ENCODE measurements at regions of chr2 and their contacts with region 1.

Region 1: DNA sequence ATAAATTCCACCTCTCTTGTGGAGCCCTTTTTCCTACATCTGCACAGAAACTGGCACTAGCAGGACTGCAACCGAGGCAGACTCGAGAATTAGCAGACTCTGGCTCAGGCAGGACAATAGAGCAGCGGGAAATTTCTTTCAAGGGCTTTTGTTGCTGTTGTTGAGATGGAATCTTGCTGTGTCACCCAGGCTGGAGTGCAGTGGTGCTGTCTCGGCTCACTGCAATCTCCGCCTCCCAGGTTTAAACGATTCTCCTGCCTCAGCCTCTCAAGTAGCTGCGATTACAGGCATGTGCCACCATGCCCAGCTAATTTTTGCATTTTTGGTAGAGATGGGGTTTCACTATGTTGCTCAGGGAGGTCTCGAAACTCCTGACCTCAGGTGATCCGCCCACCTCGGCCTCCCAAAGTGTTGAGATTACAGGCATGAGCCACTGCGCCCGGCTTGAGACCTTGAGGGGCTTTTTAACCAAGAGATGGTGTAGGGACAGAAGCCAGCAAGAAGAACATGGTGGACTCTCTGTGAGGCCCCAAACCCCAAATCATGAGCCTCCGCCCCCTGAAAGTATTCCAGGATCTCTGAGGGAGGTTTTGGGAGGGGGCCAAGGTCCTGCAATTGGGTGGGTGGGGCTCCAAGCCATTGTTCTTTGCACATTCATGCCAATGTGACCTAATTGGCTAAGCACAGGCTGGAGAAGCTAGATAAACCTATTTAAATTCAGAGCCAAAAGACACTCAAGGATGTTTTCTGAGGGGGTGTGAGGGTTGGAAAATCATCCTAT is 68.4 kb upstream of the MSH2 start:
- DNase-seq: no peak
- ATAC-seq: no peak
- H3K4me3 Mint-ChIP-seq: no peak overlapping the region
- H3K27ac Mint-ChIP-seq: no peak overlapping the region
- H3K4me1 Mint-ChIP-seq: no peaks in the 10 kb centered on the region
- H3K27me3 Mint-ChIP-seq: peaks cover 3% of the 10 kb centered on the region

Region 2: GRCh38 chr2:46857893-46858701 is 476.4 kb before region 1 on chr2:
- CTCF ChIA-PET with region 1: no interaction called
- POLR2A ChIA-PET with region 1: no interaction called
- intact Hi-C with region 1: no loop called
- DNase-seq: no peak
- ATAC-seq: no peak
- H3K4me3 Mint-ChIP-seq: no peak overlapping the region
- H3K27ac Mint-ChIP-seq: no peak overlapping the region
- H3K4me1 Mint-ChIP-seq: no peaks in the 10 kb centered on the region
- H3K27me3 Mint-ChIP-seq: no peaks in the 10 kb centered on the region

Region 3: DNA sequence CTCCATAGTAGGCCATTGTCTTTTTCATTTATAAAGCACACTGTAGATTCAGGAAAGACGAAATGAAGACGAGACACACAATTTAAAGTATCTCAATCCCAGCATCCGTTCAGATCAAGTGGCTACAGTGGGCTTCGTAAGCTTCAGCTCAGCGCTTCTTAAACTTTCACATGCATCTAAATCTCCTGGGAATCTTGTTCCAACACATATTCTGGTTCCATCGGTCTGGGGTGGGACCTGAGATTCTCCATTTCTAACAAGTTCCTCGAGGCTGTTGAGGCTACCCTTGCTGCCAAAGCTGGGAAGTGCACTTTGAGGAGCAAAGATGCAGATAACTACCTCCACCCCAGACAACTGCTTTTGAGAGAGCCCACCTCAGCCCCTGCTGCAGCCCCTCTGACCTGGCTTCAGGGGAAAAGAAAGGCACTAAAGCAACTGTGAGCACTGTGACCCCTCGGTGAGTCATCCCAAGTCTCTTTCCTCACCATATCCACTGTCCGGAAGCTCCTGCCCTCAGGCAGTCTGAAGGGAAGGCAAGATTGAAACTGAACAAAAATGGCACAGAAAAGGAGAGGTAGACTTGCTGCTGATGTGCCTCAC is 772.9 kb after region 1 on chr2:
- CTCF ChIA-PET with region 1: no interaction called
- POLR2A ChIA-PET with region 1: no interaction called
- intact Hi-C with region 1: loop called in 1 of 2 experiments (anchors 1 kb)
- DNase-seq: no peak
- ATAC-seq: no peak
- H3K4me3 Mint-ChIP-seq: no peak overlapping the region
- H3K27ac Mint-ChIP-seq: no peak overlapping the region
- H3K4me1 Mint-ChIP-seq: peaks cover 17% of the 10 kb centered on the region
- H3K27me3 Mint-ChIP-seq: no peaks in the 10 kb centered on the region

Measured in activated CD4-positive, alpha-beta T cell treated with anti-CD3 and anti-CD28 coated beads for 36 hours (primary cell).